ENCODE measurements at regions of chr3 and their contacts with region 1.

Region 1: GRCh38 chr3:47250309-47251060 is 32.1 kb downstream of the KIF9 start:
- DNase-seq: peak; percentile 67
- H3K4me3 ChIP-seq: no peak overlapping the region
- H3K27ac ChIP-seq: no peak overlapping the region
- H3K4me1 ChIP-seq: no peaks in the 10 kb centered on the region; a peak in 1 of 4 replicates
- H3K27me3 ChIP-seq: no peaks in the 10 kb centered on the region
- CTCF ChIP-seq: peak; percentile 44
- EP300 ChIP-seq: no peak
- RAD21 ChIP-seq: peak; percentile 62

Region 2: GRCh38 chr3:47261301-47261700 is 10.8 kb after region 1 on chr3:
- CTCF ChIA-PET with region 1: interaction called, 10 read pairs
- POLR2A ChIA-PET with region 1: no interaction called
- DNase-seq: no peak
- H3K4me3 ChIP-seq: no peak overlapping the region
- H3K27ac ChIP-seq: no peak overlapping the region
- H3K4me1 ChIP-seq: 0 out of 4 replicates have a peak, but pooled peaks cover 0 to 2% of the 10 kb centered on the region in 2 experiments
- H3K27me3 ChIP-seq: no peaks in the 10 kb centered on the region
- CTCF ChIP-seq: no peak
- EP300 ChIP-seq: no peak
- RAD21 ChIP-seq: no peak

Region 3: DNA sequence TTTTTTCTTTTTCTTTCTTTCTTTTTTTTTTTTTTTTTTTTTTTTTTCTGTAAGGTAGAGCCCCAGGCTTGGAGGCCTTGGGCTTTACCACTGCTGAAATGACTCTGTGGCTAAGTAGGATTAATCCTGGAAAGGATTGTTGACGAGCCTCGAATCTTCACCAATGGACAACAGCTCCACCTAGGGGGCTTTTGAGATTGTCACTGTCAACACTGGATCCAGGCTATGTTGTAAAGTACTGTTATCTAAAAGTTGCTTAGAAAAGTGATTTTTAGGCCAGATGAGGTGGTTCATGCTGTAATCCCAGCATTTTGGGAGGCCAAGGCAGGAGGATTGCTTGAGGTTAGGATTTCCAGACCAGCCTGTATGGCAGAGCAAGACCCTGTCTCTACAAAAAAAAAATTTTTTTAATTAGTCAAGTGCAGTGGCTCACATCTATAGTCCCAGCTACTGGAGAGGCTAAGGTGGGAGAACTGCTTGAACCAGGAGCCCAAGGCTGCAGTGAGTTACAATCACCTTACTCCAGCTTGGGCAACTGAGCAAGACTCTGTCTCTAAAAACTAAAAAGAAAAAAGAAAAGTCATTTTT is 73.9 kb after region 1 on chr3:
- CTCF ChIA-PET with region 1: interaction called, 16 read pairs
- POLR2A ChIA-PET with region 1: no interaction called
- DNase-seq: peak; percentile 79
- H3K4me3 ChIP-seq: no peak overlapping the region; a peak in 1 of 4 replicates
- H3K27ac ChIP-seq: no peak overlapping the region
- H3K4me1 ChIP-seq: no peaks in the 10 kb centered on the region
- H3K27me3 ChIP-seq: no peaks in the 10 kb centered on the region
- CTCF ChIP-seq: peak; percentile 79
- EP300 ChIP-seq: no peak
- RAD21 ChIP-seq: peak; percentile 88

Region 4: GRCh38 chr3:47628426-47628825 is 377.9 kb after region 1 on chr3:
- CTCF ChIA-PET with region 1: no interaction called
- POLR2A ChIA-PET with region 1: no interaction called
- DNase-seq: no peak
- H3K4me3 ChIP-seq: no peak overlapping the region
- H3K27ac ChIP-seq: no peak overlapping the region
- H3K4me1 ChIP-seq: no peaks in the 10 kb centered on the region
- H3K27me3 ChIP-seq: no peaks in the 10 kb centered on the region
- CTCF ChIP-seq: no peak
- EP300 ChIP-seq: no peak
- RAD21 ChIP-seq: no peak